ENCODE measurements at regions of chr7 and their contacts with region 1.

Region 1: DNA sequence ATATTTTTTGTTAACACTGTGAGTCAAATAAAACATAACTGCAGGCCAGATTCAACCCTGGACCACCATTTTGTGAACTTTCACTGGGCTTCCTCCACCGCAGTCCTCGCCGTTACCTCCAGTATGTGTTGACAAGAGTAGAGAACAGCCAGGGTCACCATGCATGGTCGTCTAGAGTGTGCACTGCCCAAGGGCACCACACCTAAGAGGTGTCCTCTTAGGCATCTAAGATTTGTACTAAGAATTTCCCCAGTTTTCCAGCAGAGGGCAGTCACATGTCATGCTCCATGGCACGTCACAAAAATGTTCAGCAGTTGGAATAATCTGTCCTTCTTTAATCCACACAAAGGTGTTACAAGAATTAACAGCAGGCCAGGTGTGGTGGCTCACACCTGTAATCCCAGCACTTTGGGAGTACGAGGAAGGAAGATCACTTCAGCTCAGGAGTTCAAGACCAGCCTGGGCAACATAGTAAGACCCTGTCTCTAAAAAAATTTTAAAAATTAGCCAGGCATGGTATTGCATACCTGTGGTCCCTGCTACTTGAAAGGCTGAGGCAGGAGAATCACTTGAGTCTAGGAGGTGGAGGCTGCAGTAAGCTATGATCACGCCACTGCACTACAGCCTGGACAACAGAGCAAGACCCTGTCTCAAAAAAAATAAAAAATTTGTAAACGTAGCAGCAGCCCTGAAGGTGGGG is 71.2 kb upstream of the FOXK1 start:
- DNase-seq: peak in 1 of 4 donors; percentile 68
- ATAC-seq: peak; percentile 90
- H3K4me3 ChIP-seq: no peak overlapping the region
- H3K27ac ChIP-seq: no peak overlapping the region
- H3K4me1 ChIP-seq: peaks cover 12 to 20% of the 10 kb centered on the region in 2 donors
- H3K27me3 ChIP-seq: no peaks in the 10 kb centered on the region
- CTCF ChIP-seq: peak; percentile 76 to 79

Region 2: DNA sequence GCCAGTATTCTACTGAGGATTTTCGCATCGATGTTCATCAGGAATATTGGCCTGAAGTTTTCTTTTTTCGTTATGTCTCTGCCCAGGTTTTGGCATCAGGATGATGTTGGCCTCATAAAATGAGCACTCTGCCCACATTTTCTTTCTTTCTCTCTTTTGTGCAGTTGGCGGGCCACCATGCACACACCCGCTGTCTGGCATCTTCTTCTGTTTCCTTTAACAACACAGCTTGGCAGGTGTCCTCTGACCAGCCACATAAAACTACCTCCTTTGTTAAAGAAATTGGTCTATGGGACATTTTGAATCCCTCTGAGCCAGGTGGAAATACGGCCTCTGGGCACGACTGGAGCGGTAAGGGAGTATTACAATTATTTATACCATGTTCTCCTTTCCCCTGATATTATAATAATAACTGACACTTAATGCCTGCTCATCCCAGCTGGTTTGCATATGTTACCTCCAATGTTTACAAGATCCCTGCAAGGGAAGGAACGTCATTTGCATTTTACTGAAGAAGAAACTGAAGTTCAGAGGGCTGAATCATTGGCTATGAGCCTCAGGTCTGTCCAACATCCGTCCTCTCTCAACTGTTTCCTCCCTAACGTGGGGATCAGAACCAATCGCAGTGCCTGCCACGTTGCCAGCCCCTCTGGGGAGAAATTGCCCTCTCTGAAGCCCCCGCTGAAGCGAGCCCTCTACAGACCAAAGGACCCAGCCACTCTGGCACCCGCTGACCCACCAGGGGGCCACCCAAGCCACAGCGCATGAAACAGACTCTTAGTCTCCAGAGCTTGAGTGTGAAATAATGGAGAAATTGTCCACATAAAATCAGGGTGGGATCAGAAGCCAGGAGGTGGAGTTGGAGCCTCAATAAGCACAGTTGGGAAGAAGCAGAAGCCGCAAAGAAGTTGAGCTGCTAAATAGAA is 53.8 kb before region 1 on chr7:
- intact Hi-C with region 1: no loop called
- DNase-seq: no peak
- ATAC-seq: no peak
- H3K4me3 ChIP-seq: no peak overlapping the region
- H3K27ac ChIP-seq: no peak overlapping the region
- H3K4me1 ChIP-seq: no peaks in the 10 kb centered on the region
- H3K27me3 ChIP-seq: peaks cover 0 to 14% of the 10 kb centered on the region in 2 donors
- CTCF ChIP-seq: no peak

Region 3: DNA sequence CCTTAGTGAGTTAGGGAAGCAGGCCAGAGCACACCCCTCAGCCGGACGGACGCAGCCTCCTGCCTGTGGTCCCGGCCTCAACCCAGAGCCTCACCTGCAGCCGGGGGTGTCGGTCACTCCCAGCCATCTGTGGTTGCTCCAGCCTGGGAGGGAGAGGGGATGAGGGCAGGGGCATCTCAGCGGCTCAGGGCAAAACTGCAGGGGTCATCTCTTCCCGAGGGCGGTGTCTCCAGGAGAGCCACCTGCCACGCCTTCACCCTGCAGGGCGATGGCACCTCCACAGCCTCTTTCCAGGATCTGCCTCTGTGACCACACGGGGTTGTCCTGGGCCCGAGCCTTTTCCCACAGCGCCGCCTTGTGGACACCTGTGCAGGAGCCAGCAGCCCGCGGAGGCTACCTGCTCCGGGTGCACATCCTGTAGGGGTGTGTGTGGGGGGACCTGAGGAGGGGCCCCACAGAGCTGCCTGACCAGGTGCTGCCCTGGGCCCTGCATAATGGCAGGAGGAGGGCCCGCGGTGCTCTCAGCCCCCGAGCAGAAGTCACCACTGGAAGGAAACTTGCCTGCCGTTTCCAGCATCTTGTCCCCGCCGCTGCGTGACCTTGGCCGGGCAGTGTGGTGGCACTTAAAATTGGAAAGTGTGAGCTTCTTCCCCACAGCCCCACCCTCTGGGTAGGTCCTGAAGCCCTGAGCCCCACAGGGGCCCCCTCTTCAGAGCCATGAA is 143.0 kb after region 1 on chr7:
- intact Hi-C with region 1: loop called in 1 of 2 experiments (anchors 10 kb)
- DNase-seq: peak; percentile 45 to 98 (median 80)
- ATAC-seq: peak; percentile 94
- H3K4me3 ChIP-seq: no peak overlapping the region
- H3K27ac ChIP-seq: no peak overlapping the region
- H3K4me1 ChIP-seq: peaks cover 0 to 21% of the 10 kb centered on the region in 2 donors
- H3K27me3 ChIP-seq: no peaks in the 10 kb centered on the region
- CTCF ChIP-seq: peak; percentile 83 to 90

Measured in left lung (tissue), 14 donors.